Cardiac septum (tissue), 1 donor: ENCODE measurements at regions of chr9 and their contacts with region 1.

Region 1: DNA sequence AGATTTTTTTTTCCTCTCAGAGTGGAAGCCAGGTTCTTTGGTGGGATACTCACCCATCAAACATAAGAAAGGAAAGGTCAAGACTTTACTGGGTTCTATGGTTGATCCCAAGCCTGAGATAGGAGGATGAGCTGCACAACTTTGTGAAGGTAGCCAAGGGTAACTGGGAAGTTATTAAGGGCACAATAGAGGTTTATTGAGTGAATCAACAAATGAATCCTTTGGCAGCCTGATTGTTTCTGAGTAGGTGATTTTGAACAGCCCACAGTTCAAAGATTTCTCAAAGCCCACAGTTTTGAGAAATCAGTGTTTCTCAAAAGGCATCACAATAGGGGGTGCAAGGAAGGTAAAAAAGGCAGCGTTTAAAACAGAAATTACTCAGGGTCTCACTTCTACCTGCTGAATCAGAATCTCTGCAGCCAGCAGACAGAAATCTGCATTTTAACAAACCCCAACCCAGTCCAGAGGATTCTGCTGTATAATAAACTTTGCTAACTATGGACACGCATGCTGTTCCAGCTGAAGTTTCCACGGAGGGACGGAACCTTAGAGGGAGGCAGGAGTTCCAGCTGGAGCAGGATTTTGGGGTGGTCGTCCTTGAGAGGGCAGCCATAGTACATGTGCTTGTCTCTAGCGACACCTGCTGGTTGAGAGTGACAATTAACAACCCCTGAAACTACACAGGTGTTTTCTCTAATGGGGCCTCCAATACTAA is 32.7 kb upstream of the FSD1L start:
- DNase-seq: no peak

Region 2: GRCh38 chr9:104808035-104808614 is 607.0 kb before region 1 on chr9:
- intact Hi-C with region 1: loop called (anchors 10 kb)
- DNase-seq: no peak